WTC11 (cell line): ENCODE measurements at regions of chr2 and their contacts with region 1.

Region 1: DNA sequence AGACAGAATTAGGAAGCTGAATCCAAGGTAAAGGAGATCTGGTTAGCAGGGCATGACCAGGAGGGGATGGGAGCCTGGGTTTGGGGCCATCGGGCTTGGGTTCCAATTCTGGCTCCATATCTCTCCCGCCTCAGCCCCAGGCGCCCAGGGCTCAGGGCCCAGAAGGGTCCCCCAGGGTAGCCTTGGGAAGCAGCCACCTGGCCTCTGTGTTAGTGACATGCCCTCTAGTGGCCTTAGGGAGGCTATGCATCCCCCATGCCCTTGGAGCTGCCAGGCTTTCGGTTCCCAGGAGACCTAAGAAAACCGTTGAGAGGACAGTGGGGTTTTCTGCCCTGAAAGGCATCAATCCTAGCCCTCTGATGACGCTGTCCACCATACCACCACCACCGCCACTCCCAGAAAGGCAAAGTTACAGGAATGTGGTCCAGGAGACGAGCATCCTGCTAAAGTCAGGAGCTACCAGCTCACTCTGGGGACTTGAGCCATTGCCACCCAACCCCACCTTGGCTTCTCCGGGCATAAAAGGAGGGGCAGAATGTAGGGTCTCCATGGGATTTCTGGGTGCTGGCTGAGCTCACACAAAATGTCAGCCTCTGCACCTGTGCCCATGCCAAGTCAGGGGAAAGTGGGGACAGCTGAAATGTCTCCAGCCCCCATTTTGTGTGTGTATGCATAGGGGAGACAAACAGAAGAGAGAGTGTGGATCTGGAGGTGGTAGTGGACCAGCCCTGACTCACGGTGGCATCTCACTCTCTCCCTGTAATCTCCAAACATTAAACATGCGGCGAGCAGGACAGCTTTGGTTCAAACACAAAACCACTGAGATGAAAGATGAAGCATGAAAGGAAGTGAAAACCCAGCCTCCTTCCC is 56.5 kb downstream of the EMX1 start:
- DNase-seq: peak; percentile 78
- ATAC-seq: peak; percentile 95
- H3K4me3 Mint-ChIP-seq: no peak overlapping the region
- H3K27ac Mint-ChIP-seq: no peak overlapping the region
- H3K4me1 Mint-ChIP-seq: peaks cover 46% of the 10 kb centered on the region
- H3K27me3 Mint-ChIP-seq: no peaks in the 10 kb centered on the region
- CTCF ChIP-seq: peak; percentile 81

Region 2: GRCh38 chr2:72908741-72909140 is 65.1 kb before region 1 on chr2:
- CTCF ChIA-PET with region 1: interaction called, 17 read pairs
- POLR2A ChIA-PET with region 1: no interaction called
- DNase-seq: no peak
- ATAC-seq: no peak
- H3K4me3 Mint-ChIP-seq: no peak overlapping the region
- H3K27ac Mint-ChIP-seq: no peak overlapping the region
- H3K4me1 Mint-ChIP-seq: peaks cover 6% of the 10 kb centered on the region
- H3K27me3 Mint-ChIP-seq: peaks cover 96% of the 10 kb centered on the region
- CTCF ChIP-seq: no peak

Region 3: GRCh38 chr2:72924353-72925240 is 49.2 kb before region 1 on chr2:
- CTCF ChIA-PET with region 1: interaction called, 44 read pairs
- POLR2A ChIA-PET with region 1: interaction called, 3 read pairs
- DNase-seq: peak; percentile 58
- ATAC-seq: peak; percentile 14
- H3K4me3 Mint-ChIP-seq: peak overlapping the region; percentile 72
- H3K27ac Mint-ChIP-seq: no peak overlapping the region
- H3K4me1 Mint-ChIP-seq: peaks cover 28% of the 10 kb centered on the region
- H3K27me3 Mint-ChIP-seq: no peaks in the 10 kb centered on the region
- CTCF ChIP-seq: no peak

Region 4: GRCh38 chr2:72940786-72941185 is 33.0 kb before region 1 on chr2:
- CTCF ChIA-PET with region 1: interaction called, 25 read pairs
- POLR2A ChIA-PET with region 1: no interaction called
- DNase-seq: peak; percentile 30
- ATAC-seq: peak; percentile 46
- H3K4me3 Mint-ChIP-seq: no peak overlapping the region
- H3K27ac Mint-ChIP-seq: peak overlapping the region; percentile 63
- H3K4me1 Mint-ChIP-seq: peaks cover 48% of the 10 kb centered on the region
- H3K27me3 Mint-ChIP-seq: peaks cover 25% of the 10 kb centered on the region
- CTCF ChIP-seq: no peak

Region 5: DNA sequence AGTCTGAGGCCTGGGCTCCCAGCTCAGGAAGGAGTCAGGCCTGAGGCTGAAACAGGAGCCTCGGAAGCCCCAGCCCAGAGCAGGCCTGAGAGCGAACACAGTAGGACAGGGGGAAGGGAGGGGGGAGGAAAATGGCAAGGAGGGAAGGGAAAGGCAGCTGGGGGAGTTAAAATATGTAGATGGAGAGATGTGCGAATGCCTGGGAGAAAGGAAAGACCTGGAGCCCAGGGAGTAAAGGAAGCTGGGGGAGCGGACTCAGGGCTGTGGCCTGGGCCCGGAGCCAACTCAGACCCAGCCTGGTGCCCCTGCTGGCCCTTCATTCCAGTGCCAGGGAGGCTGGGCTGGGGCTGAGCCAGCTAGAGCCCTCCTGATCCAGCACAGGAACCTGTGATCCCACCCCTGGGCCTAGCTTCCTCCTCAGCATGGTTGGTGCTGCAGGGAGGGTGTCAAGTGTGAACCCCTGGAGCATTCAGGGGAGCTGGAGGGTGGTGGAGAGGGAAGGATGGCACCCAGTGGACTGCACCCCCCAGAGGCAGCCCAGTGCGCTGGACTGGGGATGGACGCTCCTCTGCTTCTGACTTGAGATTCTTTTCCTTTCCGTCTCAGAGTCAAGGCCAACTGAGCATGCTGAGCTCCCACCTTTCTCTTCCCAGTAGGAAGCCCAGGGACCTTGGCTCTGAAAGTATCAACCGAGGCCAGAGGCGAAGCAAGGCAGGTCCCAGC is 10.2 kb before region 1 on chr2:
- CTCF ChIA-PET with region 1: interaction called, 69 read pairs
- POLR2A ChIA-PET with region 1: interaction called, 5 read pairs
- DNase-seq: peak; percentile 73
- ATAC-seq: peak; percentile 84
- H3K4me3 Mint-ChIP-seq: no peak overlapping the region
- H3K27ac Mint-ChIP-seq: peak overlapping the region; percentile 98
- H3K4me1 Mint-ChIP-seq: peaks cover 53% of the 10 kb centered on the region
- H3K27me3 Mint-ChIP-seq: peaks cover 7% of the 10 kb centered on the region
- CTCF ChIP-seq: no peak

Region 6: DNA sequence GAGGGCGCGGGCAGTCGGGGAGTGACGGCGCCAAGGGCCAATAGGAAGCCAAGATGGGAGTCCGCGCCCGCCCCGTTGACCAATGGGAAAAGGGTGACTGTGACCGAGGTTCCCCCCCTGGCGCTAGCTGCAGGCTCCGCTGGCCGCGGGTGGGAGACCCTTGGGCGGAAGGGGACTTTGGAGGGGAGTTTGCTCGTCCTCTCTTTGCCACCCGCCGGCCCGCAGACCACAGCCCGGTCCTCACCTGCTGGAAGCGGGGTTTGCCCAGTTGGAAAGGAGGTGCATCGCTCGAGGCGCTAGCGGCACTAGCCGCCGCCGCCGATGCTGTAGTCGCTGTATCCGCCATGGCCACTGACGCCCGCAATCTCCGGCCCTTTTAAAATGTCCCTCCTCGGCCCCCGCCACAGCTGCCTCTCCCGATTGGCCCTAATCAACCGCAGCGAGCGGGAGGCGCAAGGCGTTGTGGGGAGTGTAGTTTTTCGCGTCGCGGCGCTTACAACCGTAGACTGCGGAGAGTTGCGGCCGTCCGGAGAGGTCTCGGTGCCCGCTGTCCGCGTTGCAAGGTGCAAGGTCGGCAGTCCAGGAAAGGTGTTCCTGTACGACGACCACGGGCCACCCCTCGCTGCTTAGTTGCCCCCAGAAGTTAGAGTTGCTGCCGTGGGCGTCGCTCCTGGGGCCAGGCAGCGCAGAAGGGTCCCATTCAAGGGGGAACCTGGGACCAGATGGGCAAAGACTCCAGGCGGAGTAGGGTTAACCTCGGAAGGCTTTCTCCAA is 97.7 kb after region 1 on chr2 and contains the start of gene SFXN5:
- CTCF ChIA-PET with region 1: no interaction called
- POLR2A ChIA-PET with region 1: no interaction called
- DNase-seq: peak; percentile 99
- ATAC-seq: peak; percentile 86
- H3K4me3 Mint-ChIP-seq: peak within 1 kb of the TSS; percentile 77
- H3K27ac Mint-ChIP-seq: peak within 1 kb of the TSS; percentile 78
- H3K4me1 Mint-ChIP-seq: peaks cover 22% of the 10 kb centered on the region
- H3K27me3 Mint-ChIP-seq: no peaks in the 10 kb centered on the region; the same call in 1 of the 2 replicates
- CTCF ChIP-seq: no peak
- total RNA-seq, gene SFXN5: 23.1 to 25.9 TPM (median 23.6 TPM) in 3 replicates

Region 7: DNA sequence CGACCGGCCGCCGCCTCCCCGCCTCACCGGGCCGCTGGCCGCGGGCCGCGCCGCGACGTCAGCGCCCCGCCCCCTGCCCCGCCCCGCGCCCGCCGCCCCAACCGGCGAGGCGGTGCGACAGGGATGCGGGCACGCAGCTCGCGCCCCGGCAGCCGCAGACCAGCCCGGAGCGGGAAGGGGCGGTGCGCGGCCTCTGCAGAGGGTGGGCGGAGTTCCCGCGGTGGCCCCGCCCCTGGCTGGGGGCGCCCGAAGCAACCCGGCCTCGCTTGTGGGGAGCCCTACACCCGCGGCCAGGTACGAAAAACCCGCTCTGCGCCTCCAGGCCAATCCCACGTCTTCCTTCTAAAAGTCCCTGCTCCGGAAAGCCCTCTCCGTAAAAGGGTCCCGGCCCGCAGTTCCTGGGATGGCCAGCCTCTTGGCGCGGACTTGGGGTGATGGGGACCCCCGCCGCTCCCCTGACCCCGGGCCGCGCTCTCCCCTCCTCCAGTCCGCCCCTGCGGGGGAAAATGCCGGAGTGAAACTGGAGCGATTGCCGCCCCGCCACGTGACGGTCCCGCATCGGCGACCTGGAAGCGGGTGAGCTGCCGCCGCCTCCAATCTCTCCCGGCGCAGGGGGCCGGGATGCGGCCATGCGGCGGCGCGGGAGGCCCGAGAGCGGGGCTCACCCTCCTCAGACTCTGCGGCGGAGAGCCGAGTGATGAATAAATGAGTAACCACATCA is 139.3 kb after region 1 on chr2 and contains the start of gene RAB11FIP5:
- CTCF ChIA-PET with region 1: interaction called, 12 read pairs
- POLR2A ChIA-PET with region 1: no interaction called
- DNase-seq: peak; percentile 86
- ATAC-seq: peak; percentile 87
- H3K4me3 Mint-ChIP-seq: peak within 1 kb of the TSS; percentile 83
- H3K27ac Mint-ChIP-seq: no peak within 1 kb of the TSS
- H3K4me1 Mint-ChIP-seq: peaks cover 23% of the 10 kb centered on the region
- H3K27me3 Mint-ChIP-seq: peaks cover 26% of the 10 kb centered on the region
- CTCF ChIP-seq: no peak
- total RNA-seq, gene RAB11FIP5: 14.0 to 16.0 TPM (median 14.3 TPM) in 3 replicates